ENCODE measurements at regions of chr17 and their contacts with region 1.

Region 1: DNA sequence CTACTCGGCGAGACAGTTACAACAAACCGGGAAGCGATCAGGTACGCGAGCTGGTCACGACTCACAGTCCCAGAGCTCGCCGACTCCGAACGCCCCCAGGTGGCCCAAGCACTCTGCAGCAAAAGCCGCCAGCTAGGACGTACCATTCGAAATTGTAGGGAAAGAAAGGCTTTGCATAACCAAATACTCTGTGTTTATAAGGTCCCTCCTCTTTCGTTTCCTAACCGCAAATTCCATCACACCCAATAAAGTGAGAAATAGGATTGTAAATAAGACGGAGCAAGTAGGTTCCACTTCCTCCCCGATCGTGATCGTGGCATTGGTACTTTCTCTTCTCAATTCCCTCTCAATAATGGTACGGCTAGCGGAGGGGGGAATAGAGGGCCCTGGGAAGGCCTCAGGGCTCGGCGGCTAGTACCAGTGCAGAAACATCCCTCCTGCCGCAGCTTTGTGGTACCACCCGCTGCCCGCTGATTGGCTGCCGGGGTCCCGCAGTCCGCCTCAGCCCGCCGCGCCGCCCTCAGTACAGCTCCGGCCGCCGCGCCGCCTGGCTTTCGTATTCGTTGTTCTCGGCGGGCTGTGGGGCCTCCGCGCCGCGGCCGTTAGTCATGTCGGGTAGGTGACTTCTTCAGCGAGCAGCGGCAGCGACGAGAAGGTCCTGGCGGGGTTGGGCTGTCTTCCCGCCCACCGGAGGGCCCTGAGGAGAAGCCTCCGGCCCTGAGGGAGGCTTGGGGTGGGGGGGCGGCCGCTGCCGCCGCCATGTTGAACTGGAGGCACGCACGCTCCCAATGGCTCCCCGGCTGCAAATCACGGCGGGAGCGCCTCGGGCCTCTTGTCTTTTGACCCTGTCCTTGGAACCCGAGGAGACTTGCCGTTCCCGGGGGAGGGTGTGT is at the start of gene TAF15:
- DNase-seq: peak; percentile 98
- ATAC-seq: peak; percentile 88
- H3K4me3 Mint-ChIP-seq: peak within 1 kb of the TSS; percentile 78
- H3K27ac Mint-ChIP-seq: peak within 1 kb of the TSS; percentile 97
- H3K4me1 Mint-ChIP-seq: peaks cover 57% of the 10 kb centered on the region
- H3K27me3 Mint-ChIP-seq: no peaks in the 10 kb centered on the region
- total RNA-seq, gene TAF15: 316 to 330 TPM

Region 2: DNA sequence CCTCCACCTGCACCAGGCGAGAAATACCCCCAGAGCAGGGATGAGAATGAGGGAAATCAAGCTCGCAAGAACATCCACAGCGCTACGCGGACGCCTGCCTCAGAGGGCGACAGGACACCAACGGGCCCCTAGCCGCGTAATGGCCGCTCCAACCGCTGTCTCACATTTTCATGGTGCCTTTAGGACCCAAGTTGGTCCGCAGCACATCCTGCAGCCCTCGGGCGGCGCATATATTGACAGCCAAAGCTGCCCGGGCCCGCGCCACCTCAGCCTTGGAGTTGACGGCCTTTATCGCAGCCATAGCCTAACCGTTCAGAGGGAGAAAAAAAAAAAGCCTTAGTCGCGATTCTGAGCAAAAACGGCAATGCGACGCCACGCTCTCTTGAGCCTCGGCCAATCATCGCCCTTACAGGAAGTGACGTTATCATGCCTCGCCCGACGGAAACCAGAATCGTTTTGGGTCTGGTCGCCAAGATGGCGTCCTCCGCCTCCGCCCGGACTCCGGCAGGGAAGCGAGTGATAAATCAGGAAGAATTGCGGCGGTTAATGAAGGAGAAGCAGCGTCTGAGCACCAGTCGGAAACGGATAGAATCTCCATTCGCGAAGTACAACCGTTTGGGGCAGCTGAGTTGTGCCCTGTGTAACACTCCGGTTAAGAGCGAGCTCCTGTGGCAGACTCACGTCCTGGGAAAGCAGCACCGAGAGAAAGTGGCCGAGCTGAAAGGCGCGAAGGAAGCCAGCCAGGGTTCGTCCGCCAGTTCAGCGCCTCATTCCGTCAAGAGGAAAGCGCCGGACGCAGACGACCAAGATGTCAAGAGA is 847.9 kb before region 1 on chr17 and contains the starts of genes CCT6B and ZNF830:
- CTCF ChIA-PET with region 1: no interaction called
- POLR2A ChIA-PET with region 1: no interaction called
- intact Hi-C with region 1: loop called in 1 of 2 experiments (anchors 5 kb)
- DNase-seq: peak; percentile 95
- ATAC-seq: peak; percentile 91
- H3K4me3 Mint-ChIP-seq: peak within 1 kb of the TSS; percentile 99
- H3K27ac Mint-ChIP-seq: peak within 1 kb of the TSS; percentile 100
- H3K4me1 Mint-ChIP-seq: peaks cover 26% of the 10 kb centered on the region
- H3K27me3 Mint-ChIP-seq: no peaks in the 10 kb centered on the region
- total RNA-seq, gene CCT6B: 0.95 to 1.6 TPM
- total RNA-seq, gene ZNF830: 20.0 TPM

Region 3: GRCh38 chr17:35214631-35215273 is 594.5 kb before region 1 on chr17:
- CTCF ChIA-PET with region 1: no interaction called
- POLR2A ChIA-PET with region 1: no interaction called
- intact Hi-C with region 1: loop called in 1 of 2 experiments (anchors 2 kb)
- DNase-seq: peak; percentile 54
- ATAC-seq: peak; percentile 67
- H3K4me3 Mint-ChIP-seq: peak overlapping the region; percentile 49
- H3K27ac Mint-ChIP-seq: peak overlapping the region; percentile 80
- H3K4me1 Mint-ChIP-seq: peaks cover 85% of the 10 kb centered on the region
- H3K27me3 Mint-ChIP-seq: no peaks in the 10 kb centered on the region

Region 4: GRCh38 chr17:35432176-35433074 is 376.8 kb before region 1 on chr17 and contains the start of gene SLFN12:
- CTCF ChIA-PET with region 1: no interaction called
- POLR2A ChIA-PET with region 1: no interaction called
- intact Hi-C with region 1: loop called in 1 of 2 experiments (anchors 10 kb)
- DNase-seq: peak; percentile 63
- ATAC-seq: peak; percentile 83
- H3K4me3 Mint-ChIP-seq: peak within 1 kb of the TSS; percentile 90
- H3K27ac Mint-ChIP-seq: peak within 1 kb of the TSS; percentile 98
- H3K4me1 Mint-ChIP-seq: peaks cover 40% of the 10 kb centered on the region
- H3K27me3 Mint-ChIP-seq: no peaks in the 10 kb centered on the region
- total RNA-seq, gene SLFN12: 5.4 TPM

Region 5: GRCh38 chr17:35578197-35578928 is 230.8 kb before region 1 on chr17 and contains the start of gene PEX12:
- CTCF ChIA-PET with region 1: no interaction called
- POLR2A ChIA-PET with region 1: no interaction called
- intact Hi-C with region 1: loop called in 1 of 2 experiments (anchors 1 kb)
- DNase-seq: peak; percentile 92
- ATAC-seq: peak; percentile 93
- H3K4me3 Mint-ChIP-seq: peak within 1 kb of the TSS; percentile 96
- H3K27ac Mint-ChIP-seq: peak within 1 kb of the TSS; percentile 98
- H3K4me1 Mint-ChIP-seq: peaks cover 23% of the 10 kb centered on the region
- H3K27me3 Mint-ChIP-seq: no peaks in the 10 kb centered on the region
- total RNA-seq, gene PEX12: 5.7 to 6.1 TPM

Region 6: GRCh38 chr17:35794988-35795824 is 14.0 kb before region 1 on chr17 and contains the start of gene MMP28:
- CTCF ChIA-PET with region 1: interaction called, 46 read pairs
- POLR2A ChIA-PET with region 1: interaction called, 4 read pairs
- intact Hi-C with region 1: no loop called
- DNase-seq: peak; percentile 70
- ATAC-seq: peak; percentile 81
- H3K4me3 Mint-ChIP-seq: peak within 1 kb of the TSS; percentile 67
- H3K27ac Mint-ChIP-seq: peak within 1 kb of the TSS; percentile 3
- H3K4me1 Mint-ChIP-seq: peaks cover 20% of the 10 kb centered on the region
- H3K27me3 Mint-ChIP-seq: peaks cover 26% of the 10 kb centered on the region
- total RNA-seq, gene MMP28: 0.09 TPM in 1 of 2 experiments, not detected in the other

Region 7: GRCh38 chr17:36486204-36487194 is 677.3 kb after region 1 on chr17 and contains the start of gene ZNHIT3:
- CTCF ChIA-PET with region 1: no interaction called
- POLR2A ChIA-PET with region 1: no interaction called
- intact Hi-C with region 1: loop called in 1 of 2 experiments (anchors 1 kb)
- DNase-seq: peak; percentile 95
- ATAC-seq: peak; percentile 94
- H3K4me3 Mint-ChIP-seq: peak within 1 kb of the TSS; percentile 84
- H3K27ac Mint-ChIP-seq: peak within 1 kb of the TSS; percentile 96
- H3K4me1 Mint-ChIP-seq: peaks cover 50% of the 10 kb centered on the region
- H3K27me3 Mint-ChIP-seq: peaks cover 10% of the 10 kb centered on the region
- total RNA-seq, gene ZNHIT3: 38.2 to 42.3 TPM

Measured in activated CD4-positive, alpha-beta T cell treated with anti-CD3 and anti-CD28 coated beads for 36 hours (primary cell).